Right ventricle myocardium inferior (tissue), 1 donor: ENCODE measurements at regions of chr20 and their contacts with region 1.

Region 1: DNA sequence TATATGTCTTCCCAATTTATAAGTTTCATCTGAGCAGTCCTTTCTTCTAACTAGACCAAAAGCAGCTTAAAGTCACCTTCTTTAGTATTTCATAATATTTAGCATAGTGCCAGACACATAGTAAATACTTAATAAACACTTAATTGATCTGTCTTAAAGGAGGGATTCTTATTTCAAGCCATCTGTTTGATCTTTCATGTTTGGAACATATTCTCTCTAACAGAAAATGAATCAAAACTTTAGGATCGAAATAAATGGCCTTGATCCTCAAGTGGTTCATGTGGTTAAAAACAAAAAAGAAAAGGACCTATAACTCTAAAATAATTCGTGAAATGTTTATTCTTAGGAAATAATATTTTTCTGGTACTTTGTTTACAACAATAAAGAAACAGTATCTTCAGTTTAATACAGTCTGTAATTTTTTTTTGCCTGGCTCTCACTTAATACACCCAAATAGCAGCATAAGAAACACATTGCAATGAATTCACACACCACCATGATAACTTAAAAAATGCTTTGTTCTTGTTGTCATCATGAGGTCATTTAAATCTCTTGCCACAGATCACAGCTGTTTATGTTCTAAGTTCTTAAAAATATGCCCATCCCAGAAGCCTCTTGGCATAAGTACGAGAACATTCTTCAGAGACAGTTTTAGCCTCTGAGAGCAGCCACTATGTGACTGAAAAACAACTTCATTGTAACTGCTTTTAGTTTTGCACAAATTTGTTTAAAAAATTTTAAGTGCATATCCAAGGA is 48.1 kb downstream of the ESF1 start:
- DNase-seq: no peak
- ATAC-seq: peak; percentile 85

Region 2: DNA sequence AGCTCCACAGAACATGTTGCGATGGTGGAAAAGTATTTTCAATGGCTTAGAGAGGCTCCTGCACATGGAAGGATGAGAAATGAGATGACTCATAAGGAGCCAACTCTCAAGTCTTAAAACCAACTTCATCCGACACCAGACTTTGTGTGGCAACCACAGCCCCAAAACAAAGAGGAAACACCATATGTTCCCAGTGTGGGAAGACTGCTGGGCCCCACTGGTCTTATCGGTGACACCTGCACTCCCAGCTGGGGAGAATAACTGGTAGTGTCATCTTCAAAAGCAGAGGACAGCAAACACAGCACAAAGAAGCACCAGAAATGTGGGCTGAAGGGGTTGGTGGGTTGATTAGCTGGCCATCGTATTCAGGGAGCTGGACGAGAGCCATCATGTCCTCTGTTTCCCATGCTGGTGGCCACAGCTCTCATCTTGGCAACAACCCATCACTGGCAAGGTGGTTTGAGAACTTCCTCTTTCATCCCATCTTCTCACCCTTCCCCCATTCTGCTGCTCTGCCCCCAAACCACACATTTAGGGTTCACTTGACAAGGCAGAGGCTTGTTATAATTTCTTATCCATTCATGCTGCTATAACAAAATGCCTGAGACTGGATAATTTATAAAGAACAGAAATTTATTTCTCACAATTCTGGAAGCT is 51.9 kb before region 1 on chr20:
- intact Hi-C with region 1: no loop called
- DNase-seq: no peak
- ATAC-seq: no peak

Region 3: DNA sequence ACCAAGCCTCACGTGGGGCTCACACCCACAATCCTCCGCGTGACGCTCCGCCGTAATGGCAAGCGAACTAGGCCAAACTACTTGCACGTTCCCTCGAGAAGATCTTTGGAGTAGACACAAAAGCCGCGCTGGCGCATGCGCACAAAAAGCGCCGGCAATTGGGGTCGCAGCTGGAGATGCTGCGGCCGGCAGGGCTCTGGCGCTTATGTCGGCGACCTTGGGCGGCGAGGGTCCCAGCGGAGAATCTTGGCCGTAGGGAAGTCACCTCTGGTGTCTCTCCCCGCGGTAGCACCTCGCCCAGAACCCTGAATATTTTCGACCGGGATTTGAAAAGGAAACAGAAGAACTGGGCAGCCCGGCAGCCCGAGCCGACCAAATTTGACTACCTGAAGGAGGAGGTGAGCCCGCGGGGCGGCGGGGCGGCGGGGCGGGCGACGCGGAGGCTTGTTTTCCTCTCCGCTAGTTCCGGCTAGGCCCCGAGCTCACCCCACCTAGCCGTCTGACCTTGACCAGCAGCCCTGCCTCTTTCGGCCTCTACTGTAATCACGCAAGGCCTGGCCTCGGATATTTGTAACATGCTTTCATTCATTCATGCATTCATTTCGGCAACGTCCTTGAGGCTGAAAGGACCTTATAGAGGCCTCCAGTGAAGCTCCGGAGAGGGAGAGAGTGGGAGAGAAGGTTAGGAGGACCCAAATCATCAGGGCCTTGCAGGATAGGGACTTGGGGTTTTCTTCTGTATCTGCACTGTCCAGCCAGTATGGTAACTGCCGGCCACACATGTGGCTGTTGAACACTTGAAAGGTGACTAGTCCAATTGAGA is 48.5 kb after region 1 on chr20 and contains the starts of genes ESF1 and NDUFAF5:
- intact Hi-C with region 1: loop called (anchors 5 kb)
- DNase-seq: peak; percentile 96
- ATAC-seq: peak; percentile 98
- total RNA-seq, gene ESF1: 12.9 TPM
- total RNA-seq, gene NDUFAF5: 71.6 TPM

Region 4: GRCh38 chr20:14264869-14265268 is 528.3 kb after region 1 on chr20:
- intact Hi-C with region 1: no loop called
- DNase-seq: no peak
- ATAC-seq: no peak